ENCODE measurements at regions of chr2 and their contacts with region 1.

Region 1: GRCh38 chr2:233033672-233034071 is 1.2 kb downstream of the NEU2 start:
- DNase-seq: no peak
- ATAC-seq: no peak
- H3K4me3 Mint-ChIP-seq: no peak overlapping the region
- H3K27ac Mint-ChIP-seq: no peak overlapping the region
- H3K4me1 Mint-ChIP-seq: 0 out of 2 replicates have a peak, but pooled peaks cover 8% of the 10 kb centered on the region
- H3K27me3 Mint-ChIP-seq: no peaks in the 10 kb centered on the region
- CTCF ChIP-seq: no peak

Region 2: DNA sequence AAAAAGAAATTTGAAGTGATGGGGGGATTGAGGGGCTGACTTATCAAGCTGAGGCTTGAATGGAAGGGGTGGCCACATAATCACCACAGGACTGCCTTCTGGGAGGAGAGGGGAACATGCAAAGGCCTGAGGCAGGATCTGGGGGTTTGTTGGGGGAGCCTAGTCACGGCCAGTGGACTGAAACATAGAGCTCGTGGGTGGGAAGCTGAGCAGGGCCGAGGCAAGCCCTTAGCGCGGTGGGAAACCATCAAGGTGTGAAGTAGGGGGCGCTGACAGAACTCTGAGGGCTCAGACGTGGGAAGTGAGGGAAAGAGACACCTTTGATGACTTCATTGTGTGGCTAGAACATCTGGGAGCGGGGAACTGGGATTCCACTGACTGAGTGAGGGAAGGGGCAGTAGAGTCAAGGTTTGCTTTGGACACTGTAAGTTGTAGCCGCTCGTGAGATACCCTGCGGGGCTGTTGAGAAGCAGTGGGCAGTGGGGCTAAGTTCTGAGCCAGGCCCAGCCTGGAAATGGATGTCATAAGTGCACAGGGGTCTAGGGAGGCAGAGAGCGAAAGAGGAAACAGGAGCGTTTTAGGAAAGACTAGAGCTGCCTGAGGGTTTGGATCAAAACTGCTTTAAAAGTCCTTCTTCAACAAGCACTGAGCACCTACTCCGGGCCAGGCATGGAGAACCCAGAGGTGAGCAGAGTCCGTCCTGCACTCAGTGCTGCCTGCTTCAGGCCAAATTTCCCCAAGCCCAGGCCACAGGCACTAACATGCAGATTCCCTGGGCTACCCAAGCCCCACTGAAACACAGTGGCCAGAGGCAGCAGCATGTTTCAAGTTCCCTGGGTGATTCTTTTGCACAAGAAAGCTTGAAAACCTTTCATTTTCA is 164.3 kb before region 1 on chr2:
- CTCF ChIA-PET with region 1: interaction called, 12 read pairs
- POLR2A ChIA-PET with region 1: interaction called, 5 read pairs
- DNase-seq: no peak
- ATAC-seq: peak; percentile 77
- H3K4me3 Mint-ChIP-seq: no peak overlapping the region
- H3K27ac Mint-ChIP-seq: peak overlapping the region; percentile 28
- H3K4me1 Mint-ChIP-seq: peaks cover 4% of the 10 kb centered on the region; the same call in 1 of the 2 replicates
- H3K27me3 Mint-ChIP-seq: no peaks in the 10 kb centered on the region; the same call in 1 of the 2 replicates
- CTCF ChIP-seq: no peak

Region 3: GRCh38 chr2:232890896-232891601 is 142.6 kb before region 1 on chr2:
- CTCF ChIA-PET with region 1: interaction called, 12 read pairs
- POLR2A ChIA-PET with region 1: no interaction called
- DNase-seq: peak; percentile 77
- ATAC-seq: peak; percentile 69
- H3K4me3 Mint-ChIP-seq: peak overlapping the region; percentile 45
- H3K27ac Mint-ChIP-seq: peak overlapping the region; percentile 37; the same call in 1 of the 2 replicates
- H3K4me1 Mint-ChIP-seq: peaks cover 27% of the 10 kb centered on the region
- H3K27me3 Mint-ChIP-seq: peaks cover 3% of the 10 kb centered on the region; the same call in 1 of the 2 replicates
- CTCF ChIP-seq: no peak

Region 4: GRCh38 chr2:232927793-232928550 is 105.7 kb before region 1 on chr2:
- CTCF ChIA-PET with region 1: interaction called, 11 read pairs
- POLR2A ChIA-PET with region 1: no interaction called
- DNase-seq: peak; percentile 43
- ATAC-seq: peak; percentile 46
- H3K4me3 Mint-ChIP-seq: peak overlapping the region; percentile 73
- H3K27ac Mint-ChIP-seq: no peak overlapping the region
- H3K4me1 Mint-ChIP-seq: peaks cover 22% of the 10 kb centered on the region
- H3K27me3 Mint-ChIP-seq: peaks cover 75% of the 10 kb centered on the region
- CTCF ChIP-seq: no peak

Region 5: GRCh38 chr2:232979871-232980461 is 53.7 kb before region 1 on chr2:
- CTCF ChIA-PET with region 1: interaction called, 23 read pairs
- POLR2A ChIA-PET with region 1: no interaction called
- DNase-seq: no peak
- ATAC-seq: no peak
- H3K4me3 Mint-ChIP-seq: no peak overlapping the region
- H3K27ac Mint-ChIP-seq: peak overlapping the region; percentile 82
- H3K4me1 Mint-ChIP-seq: peaks cover 30% of the 10 kb centered on the region
- H3K27me3 Mint-ChIP-seq: no peaks in the 10 kb centered on the region
- CTCF ChIP-seq: no peak

Region 6: GRCh38 chr2:233053928-233054784 is 20.5 kb after region 1 on chr2:
- CTCF ChIA-PET with region 1: interaction called, 16 read pairs
- POLR2A ChIA-PET with region 1: interaction called, 6 read pairs
- DNase-seq: peak; percentile 88
- ATAC-seq: peak; percentile 46
- H3K4me3 Mint-ChIP-seq: peak overlapping the region; percentile 13; the same call in 1 of the 2 replicates
- H3K27ac Mint-ChIP-seq: 0 out of 2 replicates have a peak overlapping the region, but pooled peaks have one; percentile 67
- H3K4me1 Mint-ChIP-seq: peaks cover 52% of the 10 kb centered on the region
- H3K27me3 Mint-ChIP-seq: peaks cover 7% of the 10 kb centered on the region
- CTCF ChIP-seq: peak; percentile 94